Caco-2 (cell line): ENCODE measurements at regions of chr12 and their contacts with region 1.

Region 1: GRCh38 chr12:27014085-27014858 is at the start of gene TM7SF3:
- DNase-seq: peak; percentile 97 to 99
- H3K4me3 ChIP-seq: peak within 1 kb of the TSS; percentile 62
- H3K4me3 Mint-ChIP-seq: peak within 1 kb of the TSS; percentile 90
- H3K27ac Mint-ChIP-seq: peak within 1 kb of the TSS; percentile 13
- H3K4me1 ChIP-seq: peaks cover 18% of the 10 kb centered on the region
- H3K4me1 Mint-ChIP-seq: peaks cover 25% of the 10 kb centered on the region
- H3K27me3 ChIP-seq: no peaks in the 10 kb centered on the region
- H3K27me3 Mint-ChIP-seq: no peaks in the 10 kb centered on the region
- CTCF ChIP-seq: peak; percentile 89 to 99
- total RNA-seq, gene TM7SF3: 82.9 and 83.0 TPM in 2 replicates

Region 2: DNA sequence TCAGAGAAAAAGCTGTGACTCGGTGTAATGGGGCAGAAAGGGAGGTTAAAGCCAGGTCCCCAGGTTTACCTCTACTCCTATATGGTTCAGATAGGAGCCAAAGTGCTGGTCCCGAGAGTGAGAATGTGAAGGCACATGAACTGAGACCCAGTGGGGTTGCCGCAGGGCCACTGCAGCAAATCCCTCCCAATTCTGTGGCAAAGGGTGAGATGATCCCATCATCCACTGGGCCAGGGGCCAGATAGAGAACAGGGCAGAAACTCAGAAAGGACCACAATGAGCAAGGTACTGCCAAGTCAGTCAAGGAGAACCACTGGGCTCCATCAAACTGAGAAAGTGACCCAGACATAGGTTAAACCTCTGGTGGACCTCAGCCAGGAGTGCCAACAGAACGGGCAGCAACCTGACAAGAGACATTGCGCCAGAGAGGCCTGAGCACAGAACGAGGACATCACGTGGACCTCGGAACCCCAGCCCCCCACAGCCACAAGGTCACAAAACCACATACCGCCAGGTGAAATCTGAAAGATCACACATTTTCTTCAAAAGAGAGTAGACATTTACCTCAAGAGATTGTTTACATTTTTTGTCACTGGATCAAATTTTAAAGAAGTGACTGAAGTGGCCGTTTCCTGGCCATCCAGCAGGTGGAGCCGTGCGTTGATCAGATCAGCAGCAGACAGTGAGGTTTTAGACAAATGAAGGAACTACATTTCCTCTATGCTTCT is 160.8 kb before region 1 on chr12:
- CTCF ChIA-PET with region 1: interaction called, 3 read pairs
- POLR2A ChIA-PET with region 1: interaction called, 3 read pairs
- intact Hi-C with region 1: loop called (anchors 1 kb)
- DNase-seq: peak; percentile 66 to 79
- H3K4me3 ChIP-seq: no peak overlapping the region
- H3K4me3 Mint-ChIP-seq: no peak overlapping the region
- H3K27ac Mint-ChIP-seq: no peak overlapping the region
- H3K4me1 ChIP-seq: peaks cover 6% of the 10 kb centered on the region; the same call in 1 of the 2 replicates
- H3K4me1 Mint-ChIP-seq: no peaks in the 10 kb centered on the region
- H3K27me3 ChIP-seq: no peaks in the 10 kb centered on the region
- H3K27me3 Mint-ChIP-seq: no peaks in the 10 kb centered on the region
- CTCF ChIP-seq: peak; percentile 96 to 97

Region 3: GRCh38 chr12:26918309-26919215 is 95.7 kb before region 1 on chr12:
- CTCF ChIA-PET with region 1: interaction called, 15 read pairs
- POLR2A ChIA-PET with region 1: no interaction called
- intact Hi-C with region 1: loop called (anchors 1 kb)
- DNase-seq: peak; percentile 41 to 58
- H3K4me3 ChIP-seq: no peak overlapping the region
- H3K4me3 Mint-ChIP-seq: peak overlapping the region; percentile 3
- H3K27ac Mint-ChIP-seq: peak overlapping the region; percentile 70
- H3K4me1 ChIP-seq: peaks cover 20% of the 10 kb centered on the region
- H3K4me1 Mint-ChIP-seq: peaks cover 19% of the 10 kb centered on the region
- H3K27me3 ChIP-seq: no peaks in the 10 kb centered on the region
- H3K27me3 Mint-ChIP-seq: no peaks in the 10 kb centered on the region
- CTCF ChIP-seq: peak in 1 of 2 experiments; percentile 68

Region 4: DNA sequence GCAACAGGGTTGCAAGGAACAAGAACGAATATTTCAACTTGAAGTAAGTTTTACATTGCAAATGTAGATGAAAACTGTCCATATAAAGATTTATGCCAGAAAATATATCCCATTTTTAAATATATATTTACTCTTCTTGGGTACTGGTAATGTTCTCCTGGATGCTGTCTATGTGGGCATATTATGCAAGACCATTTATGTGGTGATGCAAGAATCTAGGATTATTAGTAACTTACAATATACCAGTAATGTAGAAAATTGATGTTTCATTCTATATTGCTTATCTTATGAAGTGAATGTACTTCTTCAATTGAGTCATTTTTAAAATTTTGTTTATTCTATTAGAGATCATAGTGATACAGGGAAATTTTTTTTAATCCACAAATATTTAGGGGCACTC is 50.9 kb before region 1 on chr12:
- CTCF ChIA-PET with region 1: no interaction called
- POLR2A ChIA-PET with region 1: no interaction called
- intact Hi-C with region 1: loop called (anchors 2 kb)
- DNase-seq: no peak
- H3K4me3 ChIP-seq: no peak overlapping the region
- H3K4me3 Mint-ChIP-seq: no peak overlapping the region
- H3K27ac Mint-ChIP-seq: no peak overlapping the region
- H3K4me1 ChIP-seq: no peaks in the 10 kb centered on the region
- H3K4me1 Mint-ChIP-seq: no peaks in the 10 kb centered on the region
- H3K27me3 ChIP-seq: no peaks in the 10 kb centered on the region
- H3K27me3 Mint-ChIP-seq: no peaks in the 10 kb centered on the region
- CTCF ChIP-seq: no peak

Region 5: DNA sequence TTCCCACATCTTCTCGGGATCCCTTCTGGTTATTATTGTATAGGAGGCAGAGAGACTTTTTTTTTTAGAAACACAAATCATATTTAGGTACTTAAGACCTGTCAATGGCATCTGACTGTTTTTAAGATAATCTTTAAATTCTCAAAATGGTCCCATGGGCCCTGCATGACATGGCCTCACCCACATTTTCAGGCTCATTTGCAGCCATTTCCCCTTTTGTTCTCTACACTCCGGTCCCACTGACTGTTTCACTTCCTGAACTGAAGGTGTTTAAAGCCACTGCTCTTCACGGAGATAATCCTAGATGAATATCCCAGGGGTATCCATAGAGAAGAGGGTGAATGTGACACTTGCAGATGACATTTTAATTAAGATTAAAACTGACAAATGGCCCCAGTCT is 80.5 kb after region 1 on chr12:
- CTCF ChIA-PET with region 1: no interaction called
- POLR2A ChIA-PET with region 1: no interaction called
- intact Hi-C with region 1: no loop called
- DNase-seq: no peak
- H3K4me3 ChIP-seq: no peak overlapping the region
- H3K4me3 Mint-ChIP-seq: no peak overlapping the region
- H3K27ac Mint-ChIP-seq: no peak overlapping the region
- H3K4me1 ChIP-seq: no peaks in the 10 kb centered on the region
- H3K4me1 Mint-ChIP-seq: no peaks in the 10 kb centered on the region
- H3K27me3 ChIP-seq: no peaks in the 10 kb centered on the region
- H3K27me3 Mint-ChIP-seq: peaks cover 9% of the 10 kb centered on the region
- CTCF ChIP-seq: no peak

Region 6: GRCh38 chr12:27123642-27124041 is 109.4 kb after region 1 on chr12:
- CTCF ChIA-PET with region 1: interaction called, 4 read pairs
- POLR2A ChIA-PET with region 1: no interaction called
- intact Hi-C with region 1: loop called (anchors 5 kb)
- DNase-seq: no peak
- H3K4me3 ChIP-seq: no peak overlapping the region
- H3K4me3 Mint-ChIP-seq: no peak overlapping the region
- H3K27ac Mint-ChIP-seq: no peak overlapping the region
- H3K4me1 ChIP-seq: no peaks in the 10 kb centered on the region
- H3K4me1 Mint-ChIP-seq: no peaks in the 10 kb centered on the region
- H3K27me3 ChIP-seq: no peaks in the 10 kb centered on the region
- H3K27me3 Mint-ChIP-seq: peaks cover 6% of the 10 kb centered on the region
- CTCF ChIP-seq: peak; percentile 18 to 32

Region 7: GRCh38 chr12:27179400-27180214 is 165.3 kb after region 1 on chr12:
- CTCF ChIA-PET with region 1: no interaction called
- POLR2A ChIA-PET with region 1: no interaction called
- intact Hi-C with region 1: no loop called
- DNase-seq: peak in 1 of 2 experiments; percentile 65
- H3K4me3 ChIP-seq: no peak overlapping the region
- H3K4me3 Mint-ChIP-seq: peak overlapping the region; percentile 8
- H3K27ac Mint-ChIP-seq: peak overlapping the region; percentile 83
- H3K4me1 ChIP-seq: peaks cover 24% of the 10 kb centered on the region
- H3K4me1 Mint-ChIP-seq: peaks cover 25% of the 10 kb centered on the region
- H3K27me3 ChIP-seq: no peaks in the 10 kb centered on the region
- H3K27me3 Mint-ChIP-seq: no peaks in the 10 kb centered on the region
- CTCF ChIP-seq: no peak

Region 8: DNA sequence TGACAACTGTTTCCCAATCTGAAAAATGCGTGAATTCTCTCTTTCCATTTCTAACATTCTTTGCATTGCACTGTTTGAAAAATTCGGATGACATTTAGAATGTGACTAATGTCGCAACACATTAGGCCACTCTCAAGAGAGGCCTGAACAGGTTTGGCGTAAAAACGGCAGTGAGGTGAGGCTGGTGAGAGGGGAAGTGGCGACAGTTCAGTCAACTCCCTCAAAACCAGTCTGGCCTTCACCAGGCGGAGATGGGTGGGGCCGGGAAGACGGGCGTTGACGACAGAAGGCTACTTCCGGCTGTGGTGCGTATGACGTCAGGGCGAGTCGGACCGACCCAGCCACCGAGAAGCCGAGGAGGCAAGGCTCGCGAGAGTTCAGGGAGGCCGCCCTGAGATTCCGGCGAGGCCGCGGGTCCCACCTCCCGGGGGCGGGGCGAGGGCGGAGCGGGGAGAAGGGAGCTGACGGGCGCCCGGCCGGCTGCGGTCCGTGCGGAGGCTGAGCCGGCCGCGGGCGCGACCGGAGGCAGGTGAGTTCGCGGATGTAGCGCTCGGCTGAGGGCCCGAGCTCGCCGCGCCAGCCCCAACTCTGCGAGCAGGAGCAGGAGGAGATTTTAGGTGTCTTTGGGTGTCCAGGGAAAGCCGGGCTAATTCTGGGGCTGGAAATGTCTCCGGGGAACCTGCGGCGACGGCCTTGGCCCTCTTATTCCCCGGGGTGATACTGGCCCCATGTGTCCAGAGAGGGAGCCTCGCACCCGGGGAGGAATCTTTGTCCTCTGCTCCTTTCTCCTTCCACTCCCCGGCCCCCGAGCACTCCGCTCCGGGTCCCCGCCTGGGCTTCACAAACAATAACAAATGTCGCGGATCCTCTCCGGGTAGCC is 229.8 kb after region 1 on chr12 and contains the start of gene STK38L:
- CTCF ChIA-PET with region 1: no interaction called
- POLR2A ChIA-PET with region 1: no interaction called
- intact Hi-C with region 1: loop called (anchors 2 kb)
- DNase-seq: peak; percentile 100
- H3K4me3 ChIP-seq: peak within 1 kb of the TSS; percentile 84
- H3K4me3 Mint-ChIP-seq: peak within 1 kb of the TSS; percentile 88
- H3K27ac Mint-ChIP-seq: peak within 1 kb of the TSS; percentile 89
- H3K4me1 ChIP-seq: peaks cover 10% of the 10 kb centered on the region; the same call in 1 of the 2 replicates
- H3K4me1 Mint-ChIP-seq: peaks cover 20% of the 10 kb centered on the region
- H3K27me3 ChIP-seq: no peaks in the 10 kb centered on the region
- H3K27me3 Mint-ChIP-seq: peaks cover 3% of the 10 kb centered on the region
- CTCF ChIP-seq: peak; percentile 26 to 27
- total RNA-seq, gene STK38L: 52.0 and 59.4 TPM in 2 replicates